Activated CD8-positive, alpha-beta T cell treated with anti-CD3 and anti-CD28 coated beads, Interleukin-2, amount 10 ng/mL, durations not matched to agents 7 days and 5 days (primary cell): ENCODE measurements at regions of chr2 and their contacts with region 1.

Region 1: GRCh38 chr2:138827426-138828054 is 47.4 kb upstream of the NXPH2 start:
- DNase-seq: peak; percentile 32
- ATAC-seq: no peak
- H3K4me3 Mint-ChIP-seq: no peak overlapping the region
- H3K27ac Mint-ChIP-seq: no peak overlapping the region
- H3K4me1 Mint-ChIP-seq: no peaks in the 10 kb centered on the region
- H3K27me3 Mint-ChIP-seq: no peaks in the 10 kb centered on the region

Region 2: GRCh38 chr2:137865954-137866540 is 961.5 kb before region 1 on chr2:
- CTCF ChIA-PET with region 1: interaction called, 10 read pairs
- POLR2A ChIA-PET with region 1: no interaction called
- DNase-seq: peak; percentile 49
- ATAC-seq: no peak
- H3K4me3 Mint-ChIP-seq: no peak overlapping the region
- H3K27ac Mint-ChIP-seq: no peak overlapping the region
- H3K4me1 Mint-ChIP-seq: no peaks in the 10 kb centered on the region
- H3K27me3 Mint-ChIP-seq: no peaks in the 10 kb centered on the region

Region 3: DNA sequence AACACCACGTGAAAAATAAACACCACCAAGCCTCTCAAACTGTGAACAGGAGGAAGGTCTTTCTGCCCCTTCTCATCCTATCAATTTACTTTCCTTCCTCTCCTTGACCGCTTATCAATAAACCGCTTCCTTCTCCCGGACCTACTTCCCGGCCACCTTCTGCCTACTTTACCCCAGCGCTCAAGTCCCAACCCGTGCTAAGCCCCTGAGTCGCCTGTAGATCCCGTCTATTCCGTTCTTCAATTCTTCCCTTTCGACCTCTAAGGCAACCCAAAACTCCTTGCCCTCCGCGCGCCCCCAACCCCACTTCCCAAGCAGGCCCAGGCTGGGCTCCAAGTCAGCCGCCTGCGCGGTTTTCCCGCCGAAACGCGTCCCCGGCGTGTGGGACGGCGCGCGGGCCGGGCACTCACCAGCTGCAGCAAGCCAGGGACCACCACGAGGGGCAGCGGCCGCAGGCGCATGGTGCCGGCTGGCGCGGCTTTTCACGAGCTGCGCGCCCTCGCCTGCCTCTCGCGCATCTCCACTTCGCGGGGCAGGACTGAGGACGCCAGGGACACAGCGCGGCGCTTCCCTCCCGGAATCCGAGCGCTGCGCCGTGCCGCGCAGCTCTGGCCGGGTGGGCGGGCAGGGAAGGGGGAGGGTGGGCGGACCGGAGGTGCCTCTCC is 47.6 kb before region 1 on chr2 and contains the start of gene NXPH2:
- CTCF ChIA-PET with region 1: no interaction called
- POLR2A ChIA-PET with region 1: no interaction called
- DNase-seq: no peak
- ATAC-seq: no peak
- H3K4me3 Mint-ChIP-seq: no peak within 1 kb of the TSS
- H3K27ac Mint-ChIP-seq: no peak within 1 kb of the TSS
- H3K4me1 Mint-ChIP-seq: peaks cover 3% of the 10 kb centered on the region
- H3K27me3 Mint-ChIP-seq: peaks cover 45% of the 10 kb centered on the region
- total RNA-seq, gene NXPH2: not detected